Left ventricle myocardium superior (tissue), 1 donor: ENCODE measurements at regions of chr4 and their contacts with region 1.

Region 1: DNA sequence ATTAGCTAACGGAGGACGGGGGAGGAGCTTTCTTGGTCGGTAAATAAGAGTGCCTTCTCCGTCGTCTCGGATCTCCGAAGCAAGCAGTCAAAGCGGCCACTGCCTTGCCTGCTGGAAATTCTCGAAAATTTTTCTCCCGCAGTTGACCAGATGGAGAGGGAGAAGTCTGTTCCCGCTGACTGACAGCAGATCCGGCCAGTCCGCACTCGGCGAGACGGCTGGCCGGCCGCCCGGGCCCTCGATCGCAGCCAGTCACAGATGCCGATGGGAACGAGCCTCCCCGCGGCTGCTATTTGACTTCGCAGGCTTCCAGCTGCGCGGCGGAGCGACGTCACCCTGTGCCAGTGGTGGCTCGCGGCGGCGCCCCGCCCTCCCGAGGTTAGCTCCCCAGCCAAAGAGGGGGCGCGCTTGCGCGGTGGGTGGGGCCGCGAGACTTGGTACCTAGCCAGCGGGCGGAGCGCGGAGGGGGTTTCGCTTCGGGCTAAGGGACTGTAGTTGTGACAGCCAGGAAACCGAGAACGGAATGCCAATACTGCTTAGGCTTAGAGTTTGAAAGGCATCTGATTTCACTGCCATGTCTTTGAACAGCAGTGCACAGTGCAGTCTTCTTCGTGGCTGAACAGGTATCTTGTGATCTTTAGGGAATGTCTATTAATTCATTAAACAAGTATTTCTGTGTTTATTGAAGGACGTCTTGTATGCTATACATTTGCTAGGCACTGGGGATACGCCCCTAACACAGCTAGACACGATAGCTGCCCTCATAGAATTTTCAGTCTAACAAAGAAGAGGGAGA is at the start of gene PPM1K:
- DNase-seq: peak; percentile 100
- ATAC-seq: peak; percentile 94
- total RNA-seq, gene PPM1K: 116 TPM

Region 2: DNA sequence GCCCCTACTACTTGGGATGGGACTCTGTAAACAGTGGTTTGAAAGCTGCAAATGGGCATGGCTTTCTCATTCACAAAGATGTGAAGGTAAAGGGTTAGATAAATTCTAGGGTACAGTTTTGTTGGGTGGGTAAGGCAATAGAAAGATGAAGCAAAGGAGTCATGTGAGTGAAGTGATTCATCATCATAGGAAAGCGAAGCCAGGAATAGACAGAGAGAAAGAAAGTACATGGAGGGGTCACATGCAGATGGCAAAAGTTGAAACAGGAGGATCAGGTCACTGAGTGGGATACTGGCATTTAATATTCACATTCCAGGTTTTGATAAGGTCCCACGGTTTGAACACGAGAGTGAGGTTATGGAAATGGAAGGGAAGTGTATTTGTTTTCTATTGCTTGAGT is 118.0 kb before region 1 on chr4:
- intact Hi-C with region 1: no loop called
- DNase-seq: no peak
- ATAC-seq: no peak

Region 3: DNA sequence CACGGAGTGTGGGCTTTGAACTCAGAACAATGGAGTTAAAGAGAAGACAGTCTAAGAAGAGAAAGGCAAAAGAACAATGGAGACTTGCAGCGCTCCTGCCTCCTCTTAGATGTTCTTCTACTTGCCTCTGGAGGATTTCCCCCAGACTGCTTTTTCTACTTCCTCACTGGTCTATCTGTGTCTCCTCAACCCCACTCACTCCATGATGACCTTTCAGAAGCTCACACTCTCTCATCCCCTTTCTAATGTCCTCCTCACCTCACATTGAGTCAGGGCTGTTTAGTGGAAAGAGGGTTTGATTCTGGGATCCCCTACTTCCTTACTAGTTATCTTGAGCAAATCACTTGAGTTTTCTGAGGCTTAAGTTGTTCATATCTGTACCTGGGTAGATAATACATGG is 81.8 kb after region 1 on chr4:
- intact Hi-C with region 1: loop called (anchors 10 kb)
- DNase-seq: no peak
- ATAC-seq: no peak